Activated CD4-positive, alpha-beta memory T cell treated with anti-CD3 and anti-CD28 coated beads for 36 hours (primary cell): ENCODE measurements at regions of chrX and their contacts with region 1.

Region 1: GRCh38 chrX:119468930-119469635 is 839 bp downstream of the SLC25A5 start:
- DNase-seq: peak; percentile 92
- H3K4me3 Mint-ChIP-seq: peak overlapping the region; percentile 85
- H3K27ac Mint-ChIP-seq: peak overlapping the region; percentile 90
- H3K4me1 Mint-ChIP-seq: peaks cover 21% of the 10 kb centered on the region
- H3K27me3 Mint-ChIP-seq: no peaks in the 10 kb centered on the region

Region 2: GRCh38 chrX:118345401-118346257 is 1123.5 kb before region 1 on chrX and contains the start of gene WDR44:
- CTCF ChIA-PET with region 1: no interaction called
- POLR2A ChIA-PET with region 1: no interaction called
- intact Hi-C with region 1: loop called (anchors 5 kb)
- DNase-seq: peak; percentile 96
- H3K4me3 Mint-ChIP-seq: peak within 1 kb of the TSS; percentile 96
- H3K27ac Mint-ChIP-seq: peak within 1 kb of the TSS; percentile 98
- H3K4me1 Mint-ChIP-seq: peaks cover 32% of the 10 kb centered on the region
- H3K27me3 Mint-ChIP-seq: no peaks in the 10 kb centered on the region
- total RNA-seq, gene WDR44: 8.2 to 9.2 TPM

Region 3: DNA sequence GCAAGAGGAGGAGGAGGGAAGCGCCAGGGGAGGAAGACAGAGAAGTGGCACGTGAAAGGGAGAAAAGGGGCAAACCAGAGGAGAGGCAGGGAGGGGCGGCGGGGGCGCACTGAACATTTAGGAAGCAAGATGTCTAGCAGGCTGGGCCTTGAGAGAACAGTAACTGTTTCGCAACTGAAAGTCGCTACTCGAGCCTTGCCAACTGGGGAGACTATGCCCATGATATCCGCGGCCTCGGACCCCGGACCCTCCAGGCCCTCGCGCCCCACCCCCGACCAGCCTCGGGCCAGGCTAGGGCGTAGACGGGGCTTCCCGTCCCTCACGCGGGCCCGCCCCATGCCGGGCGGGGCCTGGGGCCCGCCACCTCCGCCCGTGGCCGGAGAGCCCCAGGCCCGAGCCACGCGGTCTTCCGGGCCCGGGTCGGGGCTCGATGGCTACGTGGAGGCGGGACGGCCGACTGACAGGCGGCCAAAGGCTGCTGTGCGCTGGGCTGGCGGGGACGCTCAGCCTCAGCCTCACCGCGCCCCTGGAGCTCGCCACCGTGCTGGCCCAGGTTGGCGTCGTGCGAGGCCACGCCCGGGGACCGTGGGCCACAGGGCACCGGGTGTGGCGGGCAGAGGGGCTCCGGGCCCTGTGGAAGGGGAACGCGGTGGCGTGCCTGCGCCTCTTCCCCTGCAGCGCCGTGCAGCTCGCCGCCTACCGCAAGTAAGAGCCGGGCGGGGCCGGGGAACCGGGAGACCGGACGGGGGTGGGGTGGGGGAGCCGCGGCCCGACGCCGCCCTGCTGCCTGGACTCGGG is 69.9 kb before region 1 on chrX and contains the start of gene SLC25A43:
- CTCF ChIA-PET with region 1: interaction called, 5 read pairs
- POLR2A ChIA-PET with region 1: interaction called, 3 read pairs
- intact Hi-C with region 1: loop called (anchors 1 kb)
- DNase-seq: peak; percentile 38
- H3K4me3 Mint-ChIP-seq: peak within 1 kb of the TSS; percentile 61
- H3K27ac Mint-ChIP-seq: peak within 1 kb of the TSS; percentile 39
- H3K4me1 Mint-ChIP-seq: peaks cover 19% of the 10 kb centered on the region
- H3K27me3 Mint-ChIP-seq: no peaks in the 10 kb centered on the region
- total RNA-seq, gene SLC25A43: 6.0 to 6.2 TPM

Region 4: GRCh38 chrX:119574394-119575266 is 105.5 kb after region 1 on chrX and contains the start of gene UBE2A:
- CTCF ChIA-PET with region 1: no interaction called
- POLR2A ChIA-PET with region 1: no interaction called
- intact Hi-C with region 1: loop called (anchors 2 kb)
- DNase-seq: peak; percentile 92
- H3K4me3 Mint-ChIP-seq: peak within 1 kb of the TSS; percentile 81
- H3K27ac Mint-ChIP-seq: peak within 1 kb of the TSS; percentile 82
- H3K4me1 Mint-ChIP-seq: peaks cover 25% of the 10 kb centered on the region
- H3K27me3 Mint-ChIP-seq: no peaks in the 10 kb centered on the region
- total RNA-seq, gene UBE2A: 53.9 to 57.4 TPM

Region 5: DNA sequence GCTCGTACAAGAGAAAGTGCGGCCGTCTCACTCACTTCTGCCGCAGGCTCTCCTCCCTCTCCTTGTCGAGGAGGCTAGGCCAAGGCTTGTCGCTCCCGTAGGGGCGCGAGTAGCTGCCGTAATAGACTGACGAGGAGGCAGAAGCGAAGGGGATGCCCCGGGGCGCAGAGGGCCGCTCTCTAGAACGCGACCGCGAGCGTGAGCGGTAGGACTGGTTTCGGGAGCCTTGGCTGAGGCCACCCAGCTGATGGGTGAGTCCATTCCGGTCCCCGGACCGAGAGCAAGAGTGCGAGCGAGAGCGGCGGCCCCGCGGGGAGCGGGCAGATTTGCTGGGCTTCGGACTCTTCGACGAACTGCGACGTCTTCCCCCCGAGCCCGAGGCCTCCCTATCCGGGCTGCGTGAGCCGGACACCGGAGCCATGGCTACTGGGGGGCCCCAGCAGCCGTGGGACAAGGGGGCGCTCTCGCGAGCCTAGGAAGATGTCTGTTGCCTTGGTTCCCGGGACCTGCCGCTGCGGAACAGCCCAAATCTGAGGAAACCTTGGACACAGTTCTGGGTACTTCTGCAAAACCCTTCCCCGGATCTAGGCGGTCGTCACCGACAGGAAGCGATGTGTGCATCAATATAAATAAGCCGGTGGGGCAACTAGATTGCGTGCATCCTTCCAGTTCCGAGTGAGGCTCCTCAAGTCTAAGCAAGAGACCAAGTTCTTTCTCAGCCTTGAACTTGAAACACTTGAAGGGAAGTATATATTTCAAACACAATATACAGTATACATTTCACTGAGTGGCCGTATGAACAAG is 474.3 kb after region 1 on chrX and contains the start of gene NKAP:
- CTCF ChIA-PET with region 1: no interaction called
- POLR2A ChIA-PET with region 1: no interaction called
- intact Hi-C with region 1: loop called (anchors 2 kb)
- DNase-seq: peak; percentile 89
- H3K4me3 Mint-ChIP-seq: peak within 1 kb of the TSS; percentile 89
- H3K27ac Mint-ChIP-seq: peak within 1 kb of the TSS; percentile 93
- H3K4me1 Mint-ChIP-seq: peaks cover 15% of the 10 kb centered on the region
- H3K27me3 Mint-ChIP-seq: no peaks in the 10 kb centered on the region
- total RNA-seq, gene NKAP: 10.8 to 11.7 TPM

Region 6: DNA sequence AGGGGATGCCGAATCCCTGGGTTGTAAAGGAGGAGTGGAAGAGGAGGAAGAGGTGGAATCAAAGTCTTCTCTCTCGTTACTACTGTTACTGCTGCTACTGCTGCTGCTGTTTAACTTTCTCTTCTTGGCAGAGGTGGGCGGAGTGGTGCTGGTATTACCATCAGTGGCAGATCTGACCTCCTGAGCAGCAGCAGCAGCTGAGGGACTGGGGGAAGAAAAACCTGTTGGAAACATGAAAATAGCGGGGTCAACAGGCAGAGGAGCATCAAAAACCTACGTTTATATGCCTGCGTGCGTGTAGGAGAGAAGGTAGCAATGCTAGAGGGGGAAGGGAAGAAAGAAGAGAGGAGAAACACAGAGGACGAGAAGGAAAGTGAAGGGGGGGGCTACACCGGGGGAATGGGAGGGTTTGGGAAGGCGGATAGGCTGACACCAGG is 1091.3 kb after region 1 on chrX:
- CTCF ChIA-PET with region 1: no interaction called
- POLR2A ChIA-PET with region 1: no interaction called
- intact Hi-C with region 1: no loop called
- DNase-seq: peak; percentile 63
- H3K4me3 Mint-ChIP-seq: peak overlapping the region; percentile 95
- H3K27ac Mint-ChIP-seq: peak overlapping the region; percentile 95
- H3K4me1 Mint-ChIP-seq: peaks cover 25% of the 10 kb centered on the region
- H3K27me3 Mint-ChIP-seq: no peaks in the 10 kb centered on the region